Activated naive CD4-positive, alpha-beta T cell treated with anti-CD3 and anti-CD28 coated beads for 36 hours (primary cell): ENCODE measurements at regions of chr9 and their contacts with region 1.

Region 1: GRCh38 chr9:21789541-21790037 is 12.8 kb upstream of the MTAP start:
- DNase-seq: peak; percentile 74
- H3K4me3 Mint-ChIP-seq: peak overlapping the region; percentile 65
- H3K27ac Mint-ChIP-seq: peak overlapping the region; percentile 75
- H3K4me1 Mint-ChIP-seq: no peaks in the 10 kb centered on the region
- H3K27me3 Mint-ChIP-seq: peaks cover 7% of the 10 kb centered on the region

Region 2: DNA sequence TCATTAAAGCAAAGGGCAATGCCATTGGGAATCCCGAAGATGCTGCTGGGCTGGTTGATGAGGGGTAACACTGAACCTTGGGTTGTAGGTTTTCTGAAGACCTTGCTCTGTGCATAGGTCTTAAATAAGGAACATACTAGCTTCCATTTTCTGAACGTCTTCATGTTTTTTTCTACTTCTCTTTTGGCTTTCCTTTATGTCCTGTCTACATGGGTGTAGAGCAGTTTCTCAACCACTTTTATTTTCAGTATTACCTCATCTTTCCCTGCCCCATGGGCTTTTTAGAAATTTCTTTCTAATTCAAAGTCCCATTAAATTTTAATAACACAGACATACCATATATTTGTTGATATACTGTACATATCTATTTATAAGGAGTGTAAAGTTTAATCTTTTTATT is 549.7 kb before region 1 on chr9 and contains the start of gene IFNA14:
- CTCF ChIA-PET with region 1: interaction called, 5 read pairs
- intact Hi-C with region 1: loop called (anchors 1 kb)
- DNase-seq: no peak
- H3K4me3 Mint-ChIP-seq: no peak within 1 kb of the TSS
- H3K27ac Mint-ChIP-seq: no peak within 1 kb of the TSS
- H3K4me1 Mint-ChIP-seq: peaks cover 8% of the 10 kb centered on the region
- H3K27me3 Mint-ChIP-seq: peaks cover 2% of the 10 kb centered on the region
- total RNA-seq, gene IFNA14: not detected

Region 3: DNA sequence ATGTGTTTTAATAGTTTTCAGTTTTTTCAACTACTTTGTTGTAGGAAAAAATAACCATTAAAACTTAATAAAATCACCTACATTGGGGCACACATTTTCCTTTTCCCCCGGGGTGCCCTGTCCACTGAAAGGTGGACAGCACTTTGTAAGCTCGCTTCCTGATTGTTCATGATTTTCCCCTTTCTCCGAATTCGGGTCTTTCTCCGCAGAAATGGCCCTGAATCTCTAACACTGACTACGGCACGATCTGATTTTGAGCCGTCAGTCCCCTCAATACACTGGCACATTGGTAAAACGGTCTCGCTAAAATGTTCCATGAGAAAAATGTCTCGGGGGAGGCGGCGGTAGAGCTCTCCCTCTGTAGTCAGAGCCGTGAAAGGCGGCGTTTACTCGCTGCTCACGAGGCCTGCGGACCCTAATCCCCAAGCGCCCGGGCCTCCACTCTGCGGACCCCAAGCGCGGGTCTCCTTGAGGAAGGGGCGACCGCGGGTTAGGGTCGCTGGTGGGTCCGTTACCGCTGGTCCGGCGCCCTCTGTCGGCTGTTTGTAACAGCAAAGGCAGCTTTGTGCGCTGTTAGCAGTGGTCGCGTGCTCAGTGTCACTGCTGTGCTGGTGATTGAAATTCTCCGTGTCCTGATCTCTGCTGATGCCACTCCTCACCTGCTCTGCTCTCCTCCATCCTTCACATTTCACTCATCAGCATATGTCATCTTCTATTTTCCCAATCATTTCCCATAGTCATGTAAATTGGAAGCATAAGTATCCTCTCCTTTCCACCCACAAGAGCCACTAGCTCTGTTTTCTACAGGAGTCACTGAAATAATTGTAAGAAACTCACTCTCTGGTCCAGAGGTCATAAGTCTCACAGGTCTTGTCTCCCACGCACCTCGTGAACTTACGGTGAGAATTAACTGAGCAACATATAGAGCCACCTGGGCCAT is 393.5 kb before region 1 on chr9:
- CTCF ChIA-PET with region 1: interaction called, 3 read pairs
- intact Hi-C with region 1: loop called (anchors 1 kb)
- DNase-seq: peak; percentile 64
- H3K4me3 Mint-ChIP-seq: peak overlapping the region; percentile 50
- H3K27ac Mint-ChIP-seq: no peak overlapping the region
- H3K4me1 Mint-ChIP-seq: peaks cover 9% of the 10 kb centered on the region
- H3K27me3 Mint-ChIP-seq: peaks cover 39% of the 10 kb centered on the region

Region 4: GRCh38 chr9:21465859-21466518 is 323.6 kb before region 1 on chr9:
- CTCF ChIA-PET with region 1: interaction called, 45 read pairs
- intact Hi-C with region 1: loop called (anchors 1 kb)
- DNase-seq: no peak
- H3K4me3 Mint-ChIP-seq: no peak overlapping the region
- H3K27ac Mint-ChIP-seq: no peak overlapping the region
- H3K4me1 Mint-ChIP-seq: peaks cover 2% of the 10 kb centered on the region
- H3K27me3 Mint-ChIP-seq: no peaks in the 10 kb centered on the region

Region 5: DNA sequence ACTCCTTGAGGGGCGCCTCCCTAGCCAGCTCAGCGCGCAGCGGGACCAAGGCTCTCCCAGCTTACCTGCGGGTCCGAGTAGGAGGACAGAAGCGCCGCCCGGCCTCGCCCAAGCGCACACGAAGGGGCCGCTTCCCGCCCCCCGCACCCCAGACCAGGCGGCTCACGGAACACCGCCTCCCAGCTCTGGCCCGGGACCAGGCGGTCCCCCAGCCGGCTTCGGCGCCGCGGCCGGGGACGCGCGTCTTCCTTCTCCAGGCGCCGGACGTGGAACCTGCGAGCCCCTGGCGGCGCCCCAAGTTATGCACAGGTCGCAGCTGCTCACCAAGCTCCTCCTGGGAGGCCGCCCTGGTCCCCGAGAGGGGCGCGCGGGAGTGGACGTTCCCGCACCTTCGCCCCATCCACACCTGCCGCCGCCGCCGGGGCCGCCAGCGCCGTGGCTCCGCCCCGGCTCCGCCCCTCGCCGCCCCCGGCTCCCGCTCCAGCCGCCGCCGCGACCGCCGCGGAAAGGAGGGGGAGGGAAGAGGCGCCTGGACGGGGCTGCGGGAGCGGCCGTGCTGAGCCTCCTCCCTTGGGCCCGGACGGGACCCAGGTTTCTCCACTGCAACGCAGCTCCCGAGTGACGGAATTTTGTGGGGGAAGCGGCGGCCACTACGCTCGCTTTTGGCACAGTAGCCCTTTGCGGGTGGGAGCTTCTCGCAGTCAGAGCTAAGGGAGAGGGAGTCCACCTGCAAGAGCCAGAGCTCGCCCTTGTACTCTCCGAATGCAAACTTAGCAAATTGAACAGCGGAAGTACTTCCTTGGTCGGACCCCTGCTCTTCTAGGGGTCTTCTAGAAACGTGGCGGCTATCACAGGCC is 229.9 kb before region 1 on chr9:
- CTCF ChIA-PET with region 1: no interaction called
- intact Hi-C with region 1: loop called (anchors 2 kb)
- DNase-seq: peak; percentile 61
- H3K4me3 Mint-ChIP-seq: peak overlapping the region; percentile 88
- H3K27ac Mint-ChIP-seq: peak overlapping the region; percentile 56
- H3K4me1 Mint-ChIP-seq: peaks cover 43% of the 10 kb centered on the region
- H3K27me3 Mint-ChIP-seq: no peaks in the 10 kb centered on the region

Region 6: GRCh38 chr9:21777701-21778100 is 11.9 kb before region 1 on chr9:
- CTCF ChIA-PET with region 1: interaction called, 11 read pairs
- intact Hi-C with region 1: no loop called
- DNase-seq: no peak
- H3K4me3 Mint-ChIP-seq: no peak overlapping the region
- H3K27ac Mint-ChIP-seq: no peak overlapping the region
- H3K4me1 Mint-ChIP-seq: peaks cover 3% of the 10 kb centered on the region
- H3K27me3 Mint-ChIP-seq: no peaks in the 10 kb centered on the region

Region 7: DNA sequence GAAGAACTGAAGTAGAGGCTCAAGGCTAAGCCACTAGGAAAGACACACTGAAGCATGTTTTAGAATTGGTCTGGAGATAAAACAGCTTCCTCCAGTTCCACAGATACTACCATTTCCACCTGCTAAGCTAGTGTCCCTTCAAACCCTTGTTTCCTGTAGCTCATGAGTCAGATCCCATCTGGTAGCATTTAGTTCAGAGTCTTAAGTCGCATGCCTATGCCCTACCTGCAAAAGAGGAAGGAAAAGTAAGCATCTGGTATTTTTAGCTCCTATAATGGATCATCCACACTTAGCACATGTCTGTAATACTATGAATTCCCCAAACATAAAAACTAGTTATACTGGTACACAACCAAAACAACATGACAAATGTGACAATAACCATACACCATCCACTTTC is 112.5 kb after region 1 on chr9:
- CTCF ChIA-PET with region 1: no interaction called
- intact Hi-C with region 1: no loop called
- DNase-seq: no peak
- H3K4me3 Mint-ChIP-seq: no peak overlapping the region
- H3K27ac Mint-ChIP-seq: no peak overlapping the region
- H3K4me1 Mint-ChIP-seq: no peaks in the 10 kb centered on the region
- H3K27me3 Mint-ChIP-seq: no peaks in the 10 kb centered on the region

Region 8: DNA sequence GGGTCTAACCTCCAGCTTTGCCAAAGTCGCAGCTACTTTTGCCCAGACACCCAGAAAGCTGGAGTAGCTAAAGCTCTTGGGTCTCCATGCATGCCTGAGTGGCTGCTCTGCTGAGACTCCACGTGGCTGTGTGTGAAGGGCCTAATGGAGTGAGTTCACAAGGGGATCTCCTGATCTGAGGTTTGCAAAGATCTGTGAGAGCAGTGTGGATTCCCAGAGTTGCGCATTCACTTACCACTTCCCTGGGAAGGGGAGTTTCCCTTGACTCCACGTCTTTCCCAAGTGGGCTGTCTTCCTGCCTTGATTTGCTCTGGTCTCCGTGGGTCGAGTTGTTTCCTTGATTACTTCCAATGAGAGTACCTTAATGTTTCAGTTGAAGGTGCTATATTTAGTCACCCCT is 237.1 kb after region 1 on chr9:
- CTCF ChIA-PET with region 1: no interaction called
- intact Hi-C with region 1: no loop called
- DNase-seq: no peak
- H3K4me3 Mint-ChIP-seq: no peak overlapping the region
- H3K27ac Mint-ChIP-seq: no peak overlapping the region
- H3K4me1 Mint-ChIP-seq: no peaks in the 10 kb centered on the region
- H3K27me3 Mint-ChIP-seq: peaks cover 39% of the 10 kb centered on the region